Testis (tissue), 5 donors: ENCODE measurements at regions of chr18 and their contacts with region 1.

Region 1: DNA sequence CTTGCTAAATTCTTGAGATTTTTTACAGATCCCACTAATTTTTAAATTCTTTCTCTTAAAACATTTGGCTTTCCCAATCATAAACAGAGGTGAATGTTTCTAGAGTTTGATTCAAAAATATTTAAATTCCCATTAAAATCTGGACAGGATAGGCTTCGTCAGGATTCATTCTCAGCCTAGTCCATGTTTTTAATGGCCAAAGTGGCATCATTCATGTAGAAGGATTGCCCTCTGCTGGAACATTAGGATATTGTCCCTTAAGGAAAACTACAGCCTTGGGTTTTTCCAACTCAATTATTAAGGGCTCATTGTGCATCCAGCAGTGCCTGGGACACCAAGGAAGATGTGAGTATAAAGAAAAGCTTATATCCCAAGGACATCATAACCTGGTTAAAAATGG is 71.7 kb downstream of the TPGS2 start:
- DNase-seq: no peak
- H3K4me3 ChIP-seq: no peak overlapping the region
- H3K27ac ChIP-seq: no peak overlapping the region
- H3K4me1 ChIP-seq: no peaks in the 10 kb centered on the region
- H3K27me3 ChIP-seq: no peaks in the 10 kb centered on the region
- CTCF ChIP-seq: peak; percentile 61 to 66 (median 63)
- POLR2A ChIP-seq: no peak

Region 2: GRCh38 chr18:36688020-36688965 is 68.8 kb before region 1 on chr18:
- intact Hi-C with region 1: loop called (anchors 5 kb)
- DNase-seq: peak; percentile 72
- H3K4me3 ChIP-seq: no peak overlapping the region
- H3K27ac ChIP-seq: no peak overlapping the region
- H3K4me1 ChIP-seq: no peaks in the 10 kb centered on the region
- H3K27me3 ChIP-seq: no peaks in the 10 kb centered on the region
- CTCF ChIP-seq: peak; percentile 55 to 82 (median 74)
- POLR2A ChIP-seq: no peak

Region 3: DNA sequence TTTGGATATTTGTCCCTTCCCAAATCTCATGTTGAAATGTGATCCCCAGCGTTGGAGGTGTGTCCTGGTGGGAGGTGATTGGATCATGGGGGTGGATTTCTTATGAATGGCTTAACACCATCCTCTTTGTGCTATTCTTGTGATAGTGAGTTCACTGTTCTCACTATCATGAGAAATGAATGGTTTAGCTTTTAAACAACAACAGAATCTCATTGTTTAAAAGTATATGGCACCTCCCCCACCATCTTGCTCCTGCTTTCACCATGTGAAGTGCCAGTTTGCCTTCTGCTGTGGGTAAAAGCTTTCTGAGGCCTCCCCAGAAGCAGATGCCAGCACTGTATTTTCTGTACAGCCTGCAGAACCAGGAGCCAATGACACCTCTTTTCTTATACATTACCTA is 110.0 kb after region 1 on chr18:
- intact Hi-C with region 1: no loop called
- DNase-seq: no peak
- H3K4me3 ChIP-seq: no peak overlapping the region
- H3K27ac ChIP-seq: no peak overlapping the region
- H3K4me1 ChIP-seq: no peaks in the 10 kb centered on the region
- H3K27me3 ChIP-seq: no peaks in the 10 kb centered on the region
- CTCF ChIP-seq: no peak
- POLR2A ChIP-seq: no peak